ENCODE measurements at regions of chr12 and their contacts with region 1.

Region 1: GRCh38 chr12:115983226-115983798 is 294.2 kb downstream of the MED13L start:
- DNase-seq: peak; percentile 13
- ATAC-seq: no peak
- H3K4me3 Mint-ChIP-seq: no peak overlapping the region
- H3K27ac Mint-ChIP-seq: no peak overlapping the region
- H3K4me1 Mint-ChIP-seq: peaks cover under 1% of the 10 kb centered on the region
- H3K27me3 Mint-ChIP-seq: no peaks in the 10 kb centered on the region
- CTCF ChIP-seq: peak; percentile 32

Region 2: DNA sequence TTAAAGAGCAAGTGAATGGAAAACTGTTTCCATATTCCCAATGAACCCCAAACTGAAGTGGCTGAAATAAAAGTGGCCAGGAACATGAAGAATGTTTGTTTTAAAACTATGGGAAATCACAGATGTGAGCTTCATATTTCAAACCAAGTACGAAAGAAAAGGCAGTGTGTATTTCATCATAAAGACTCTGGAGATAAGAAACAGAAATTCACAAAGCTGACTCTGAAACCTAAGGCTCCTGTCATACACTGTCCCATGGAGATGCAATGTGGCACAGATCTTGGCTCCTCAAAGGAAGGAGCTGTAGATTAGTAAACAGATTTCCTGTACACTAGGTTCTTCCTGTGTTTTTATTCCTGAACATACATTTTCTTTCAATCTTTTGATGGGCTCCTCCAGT is 10.2 kb before region 1 on chr12:
- CTCF ChIA-PET with region 1: interaction called, 10 read pairs
- POLR2A ChIA-PET with region 1: no interaction called
- intact Hi-C with region 1: no loop called
- DNase-seq: no peak
- ATAC-seq: no peak
- H3K4me3 Mint-ChIP-seq: no peak overlapping the region
- H3K27ac Mint-ChIP-seq: peak overlapping the region; percentile 16
- H3K4me1 Mint-ChIP-seq: no peaks in the 10 kb centered on the region
- H3K27me3 Mint-ChIP-seq: no peaks in the 10 kb centered on the region
- CTCF ChIP-seq: no peak